ENCODE measurements at regions of chr2 and their contacts with region 1.

Region 1: DNA sequence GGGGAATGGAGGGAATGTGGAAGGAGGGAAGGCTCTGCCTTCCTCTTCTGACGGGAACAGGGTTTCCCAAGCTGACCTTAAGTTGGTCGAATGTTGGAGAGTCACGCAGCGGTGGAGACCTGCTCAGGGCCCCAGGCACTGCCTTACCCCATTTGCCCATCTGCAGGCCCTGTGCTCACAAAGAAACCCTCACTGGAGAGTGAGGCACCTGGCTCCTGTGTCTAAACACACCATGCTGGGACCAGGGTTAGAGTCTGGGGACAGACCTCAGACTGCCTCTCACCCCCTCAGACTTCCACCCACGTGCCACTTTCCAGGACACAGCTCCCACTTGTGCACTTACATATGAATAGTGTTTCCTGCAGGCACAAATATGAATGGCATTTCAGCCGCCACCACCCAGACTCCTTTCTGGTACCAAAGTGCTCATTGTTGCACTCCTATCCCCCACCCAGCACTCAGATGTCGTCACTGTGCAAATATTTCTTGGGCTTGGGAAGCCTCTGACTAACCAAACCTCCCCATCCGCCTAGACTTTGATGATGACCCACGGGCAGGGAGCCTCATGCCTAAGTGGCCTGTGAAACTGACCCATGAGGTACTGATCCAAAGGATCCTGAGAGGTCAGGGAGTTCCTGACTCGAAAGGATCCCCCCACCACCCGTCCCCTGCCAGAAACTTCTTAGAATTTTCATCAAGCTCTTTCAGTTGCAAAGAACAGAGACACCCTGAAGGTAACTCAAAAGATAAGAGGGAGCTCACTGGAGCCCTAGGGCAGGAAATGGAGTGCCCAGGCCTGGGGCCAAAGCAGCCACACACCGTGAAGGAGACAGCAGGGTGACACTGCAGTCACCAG is 78.3 kb downstream of the STPG4 start:
- DNase-seq: peak; percentile 100
- ATAC-seq: peak; percentile 78
- H3K4me3 ChIP-seq: peak overlapping the region in 1 of 3 experiments; percentile 18; a peak in 1 of 6 replicates
- H3K27ac ChIP-seq: peak overlapping the region; percentile 88
- H3K4me1 ChIP-seq: peaks cover 83% of the 10 kb centered on the region
- H3K27me3 ChIP-seq: no peaks in the 10 kb centered on the region
- CTCF ChIP-seq: peak; percentile 36; the same call in 1 of the 2 replicates
- EP300 ChIP-seq: peak; percentile 61 to 96; a peak in 3 of 4 replicates
- POLR2A ChIP-seq: peak in 1 of 2 experiments; percentile 6; a peak in 1 of 4 replicates
- RAD21 ChIP-seq: peak; percentile 38; the same call in 1 of the 2 replicates

Region 2: DNA sequence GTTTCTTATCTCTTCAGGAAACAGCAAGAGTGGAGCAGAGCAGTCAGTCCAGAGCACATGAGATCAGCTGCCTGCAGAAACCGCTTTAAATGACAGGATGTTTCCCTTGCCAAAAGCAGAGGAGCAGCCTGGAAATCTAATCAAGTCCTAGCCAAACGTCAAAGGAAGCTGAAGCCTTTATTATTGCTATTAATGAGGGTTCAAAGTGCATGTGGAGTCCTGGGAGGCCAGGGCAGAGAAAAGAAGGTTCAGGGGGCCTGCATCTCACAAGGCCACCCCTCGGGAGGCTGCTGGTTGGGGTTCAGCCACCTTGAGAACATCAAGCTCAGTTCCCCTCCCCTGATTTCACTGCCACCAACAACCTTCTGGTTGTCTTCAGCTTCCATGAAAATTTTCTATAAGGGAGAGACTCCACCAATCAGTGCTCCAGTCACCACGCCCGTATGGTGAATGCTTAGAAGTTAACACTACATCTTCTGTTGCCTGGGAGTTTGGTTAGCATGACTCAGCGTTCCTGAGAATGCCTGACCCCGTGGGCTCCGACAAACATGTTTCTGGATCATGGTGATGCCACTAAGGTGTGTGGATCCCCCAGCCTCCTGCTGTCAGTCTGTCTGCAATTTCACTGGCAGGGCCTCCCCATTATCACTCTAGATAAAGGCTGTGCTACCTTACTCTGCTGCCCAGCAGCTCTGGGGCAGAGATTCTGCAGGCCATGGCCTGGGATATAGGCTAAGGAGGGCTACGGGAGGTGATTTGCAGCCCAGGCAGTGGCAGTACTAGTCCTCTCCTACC is 12.1 kb after region 1 on chr2:
- CTCF ChIA-PET with region 1: no interaction called
- POLR2A ChIA-PET with region 1: interaction called, 19 read pairs
- in situ Hi-C with region 1: no loop called
- intact Hi-C with region 1: no loop called
- DNase-seq: peak; percentile 73
- ATAC-seq: peak; percentile 46
- H3K4me3 ChIP-seq: no peak overlapping the region
- H3K27ac ChIP-seq: peak overlapping the region; percentile 17
- H3K4me1 ChIP-seq: peaks cover 29% of the 10 kb centered on the region
- H3K27me3 ChIP-seq: no peaks in the 10 kb centered on the region; a peak in 1 of 5 replicates
- CTCF ChIP-seq: no peak
- EP300 ChIP-seq: no peak
- POLR2A ChIP-seq: no peak
- RAD21 ChIP-seq: no peak

Region 3: GRCh38 chr2:47098953-47099352 is 22.1 kb after region 1 on chr2:
- CTCF ChIA-PET with region 1: no interaction called
- POLR2A ChIA-PET with region 1: interaction called, 13 read pairs
- in situ Hi-C with region 1: no loop called
- intact Hi-C with region 1: no loop called
- DNase-seq: no peak
- ATAC-seq: peak; percentile 41; the same call in 2 of the 3 replicates
- H3K4me3 ChIP-seq: no peak overlapping the region
- H3K27ac ChIP-seq: no peak overlapping the region
- H3K4me1 ChIP-seq: peaks cover 16% of the 10 kb centered on the region
- H3K27me3 ChIP-seq: no peaks in the 10 kb centered on the region; a peak in 1 of 5 replicates
- CTCF ChIP-seq: no peak
- EP300 ChIP-seq: no peak
- POLR2A ChIP-seq: no peak
- RAD21 ChIP-seq: no peak

Region 4: GRCh38 chr2:47119001-47119400 is 42.2 kb after region 1 on chr2:
- CTCF ChIA-PET with region 1: no interaction called
- POLR2A ChIA-PET with region 1: interaction called, 22 read pairs
- in situ Hi-C with region 1: no loop called
- intact Hi-C with region 1: loop called (anchors 5 kb)
- DNase-seq: no peak
- ATAC-seq: peak; percentile 26; the same call in 1 of the 3 replicates
- H3K4me3 ChIP-seq: no peak overlapping the region
- H3K27ac ChIP-seq: no peak overlapping the region
- H3K4me1 ChIP-seq: peaks cover 33% of the 10 kb centered on the region
- H3K27me3 ChIP-seq: 0 out of 5 replicates have a peak, but pooled peaks cover 0 to 2% of the 10 kb centered on the region in 2 experiments
- CTCF ChIP-seq: no peak
- EP300 ChIP-seq: no peak
- POLR2A ChIP-seq: no peak
- RAD21 ChIP-seq: no peak

Region 5: DNA sequence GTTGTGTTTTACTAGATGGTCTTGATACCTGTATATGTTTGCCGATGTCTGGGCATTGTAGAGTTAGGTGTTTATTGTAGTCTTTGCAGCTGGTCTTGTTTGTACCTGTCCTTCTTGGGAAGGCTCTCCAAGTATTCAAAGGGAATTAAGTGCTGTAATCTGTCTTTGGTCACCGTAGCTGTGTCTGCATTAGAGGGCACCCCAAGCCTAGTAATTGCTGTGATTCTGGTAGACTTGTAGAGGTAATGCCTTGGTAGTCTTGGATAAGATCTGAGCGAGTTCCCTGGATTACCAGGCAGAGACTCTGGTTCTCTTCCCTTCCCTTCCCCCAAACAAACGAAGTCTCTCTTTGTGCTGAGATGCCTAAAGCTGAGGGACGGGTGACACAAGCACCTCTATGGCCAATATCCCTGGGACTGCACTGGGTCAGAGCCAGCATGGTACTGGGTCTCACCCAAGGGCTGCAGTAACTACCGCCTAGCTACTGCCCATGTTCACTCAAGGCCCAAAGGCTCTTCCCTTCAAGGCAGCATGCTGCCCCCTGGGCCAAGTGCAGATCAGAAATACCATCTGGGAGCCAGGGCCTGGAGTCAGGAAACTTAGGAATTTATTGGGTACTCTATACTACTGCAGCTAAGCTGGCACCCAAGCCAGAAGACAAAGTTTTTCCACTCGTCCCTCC is 51.2 kb after region 1 on chr2:
- CTCF ChIA-PET with region 1: no interaction called
- POLR2A ChIA-PET with region 1: interaction called, 34 read pairs
- in situ Hi-C with region 1: no loop called
- intact Hi-C with region 1: no loop called
- DNase-seq: no peak
- ATAC-seq: peak; percentile 23
- H3K4me3 ChIP-seq: no peak overlapping the region
- H3K27ac ChIP-seq: no peak overlapping the region
- H3K4me1 ChIP-seq: peaks cover 44% of the 10 kb centered on the region
- H3K27me3 ChIP-seq: no peaks in the 10 kb centered on the region
- CTCF ChIP-seq: peak; percentile 54
- EP300 ChIP-seq: no peak
- POLR2A ChIP-seq: no peak
- RAD21 ChIP-seq: no peak

Region 6: DNA sequence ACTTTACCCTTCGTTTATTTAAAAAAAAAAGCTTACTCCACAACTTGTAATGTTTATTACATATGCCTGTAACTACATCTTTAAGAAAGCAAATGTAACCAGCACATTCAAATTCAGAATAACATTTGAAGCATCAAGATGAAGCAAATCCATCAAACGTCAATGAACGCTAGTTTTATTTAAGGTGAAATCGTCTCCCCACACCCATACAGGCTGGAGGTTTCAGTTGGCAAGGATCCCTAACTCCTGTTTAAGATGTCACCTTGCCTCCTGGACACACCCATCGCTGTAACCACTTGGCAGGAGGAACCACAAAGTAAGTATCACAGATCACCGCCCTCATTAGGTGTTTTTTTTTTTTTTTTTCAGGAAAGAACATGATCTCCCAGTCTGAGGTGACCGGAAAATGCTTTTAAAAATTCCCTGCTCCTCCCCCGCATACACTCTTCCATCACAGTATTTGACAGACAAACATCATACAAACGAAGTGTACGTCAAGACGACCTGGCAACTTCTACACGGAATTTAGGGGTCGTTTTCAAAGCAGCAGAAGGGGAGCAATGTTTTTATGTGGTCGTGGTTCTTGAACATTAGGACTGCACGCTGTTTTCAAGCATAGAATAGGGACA is 98.0 kb after region 1 on chr2:
- CTCF ChIA-PET with region 1: no interaction called
- POLR2A ChIA-PET with region 1: interaction called, 12 read pairs
- in situ Hi-C with region 1: no loop called
- intact Hi-C with region 1: no loop called
- DNase-seq: peak; percentile 49
- ATAC-seq: no peak
- H3K4me3 ChIP-seq: peak overlapping the region; percentile 89 to 99 (median 97)
- H3K27ac ChIP-seq: peak overlapping the region; percentile 66
- H3K4me1 ChIP-seq: peaks cover 57% of the 10 kb centered on the region
- H3K27me3 ChIP-seq: peaks cover 0 to 2% of the 10 kb centered on the region in 2 experiments; a peak in 1 of 5 replicates
- CTCF ChIP-seq: no peak
- EP300 ChIP-seq: no peak
- POLR2A ChIP-seq: peak in 1 of 2 experiments; percentile 74; a peak in 2 of 4 replicates
- RAD21 ChIP-seq: no peak

Region 7: GRCh38 chr2:47309952-47310800 is 233.4 kb after region 1 on chr2:
- CTCF ChIA-PET with region 1: no interaction called
- POLR2A ChIA-PET with region 1: interaction called, 12 read pairs
- in situ Hi-C with region 1: no loop called
- intact Hi-C with region 1: loop called (anchors 1 kb)
- DNase-seq: peak; percentile 96
- ATAC-seq: peak; percentile 83
- H3K4me3 ChIP-seq: peak overlapping the region; percentile 14 to 59 (median 45)
- H3K27ac ChIP-seq: peak overlapping the region; percentile 77
- H3K4me1 ChIP-seq: peaks cover 95% of the 10 kb centered on the region
- H3K27me3 ChIP-seq: no peaks in the 10 kb centered on the region
- CTCF ChIP-seq: no peak
- EP300 ChIP-seq: peak in 1 of 2 experiments; percentile 96; a peak in 2 of 4 replicates
- POLR2A ChIP-seq: peak in 1 of 2 experiments; percentile 20; a peak in 1 of 4 replicates
- RAD21 ChIP-seq: no peak

Measured in HepG2 (cell line).